Psoas muscle (tissue), 8 donors: ENCODE measurements at regions of chr6 and their contacts with region 1.

Region 1: DNA sequence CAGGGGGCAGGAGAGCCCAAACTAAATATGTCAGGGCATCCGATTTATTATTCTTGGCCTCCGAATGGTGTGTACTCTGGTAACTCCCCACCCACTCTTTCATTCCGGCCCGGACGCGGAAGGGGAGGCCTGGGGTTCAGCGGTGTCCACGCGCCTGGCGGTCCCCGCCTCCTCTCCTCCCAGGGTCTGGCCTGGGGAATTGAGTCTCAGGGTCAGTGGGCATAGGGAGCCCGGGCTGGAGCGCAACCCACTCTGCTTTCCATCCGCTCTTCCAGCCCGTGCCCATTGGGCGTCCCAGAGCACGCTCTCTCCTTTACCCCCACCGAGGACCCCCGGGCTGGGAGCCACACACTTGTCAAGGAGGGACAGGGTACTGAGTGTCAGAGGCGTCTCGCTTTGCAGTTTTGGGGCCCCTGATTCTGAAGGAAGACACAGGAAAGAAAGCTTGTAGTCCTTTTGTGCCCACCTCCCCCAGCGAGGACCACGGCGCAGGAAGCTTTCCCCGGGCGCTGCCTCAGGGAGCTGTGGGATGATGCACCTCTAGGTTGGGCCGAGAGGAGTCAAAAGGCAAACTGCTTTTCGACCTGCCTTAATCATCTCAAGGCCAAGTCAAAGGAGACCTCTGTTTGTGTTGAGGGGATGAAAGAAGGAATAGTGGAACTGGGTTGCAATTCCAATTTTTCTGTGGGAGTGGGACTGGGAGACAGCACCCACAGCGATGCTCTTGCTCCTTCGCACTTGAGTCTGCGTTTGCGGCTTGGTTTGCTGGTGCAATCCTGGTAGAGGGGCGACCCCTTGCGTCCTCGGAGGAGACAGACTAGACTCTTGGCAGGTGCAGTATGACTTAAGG is 2.5 kb downstream of the RSPO3 start:
- DNase-seq: peak; percentile 79 to 88
- ATAC-seq: peak; percentile 81 to 87 (median 81)
- H3K4me3 ChIP-seq: peak overlapping the region; percentile 81
- H3K27ac ChIP-seq: peak overlapping the region; percentile 84
- H3K4me1 ChIP-seq: peaks cover 32% of the 10 kb centered on the region
- H3K27me3 ChIP-seq: peaks cover 0 to 20% (median 0%) of the 10 kb centered on the region in 3 donors
- CTCF ChIP-seq: peak; percentile 81

Region 2: DNA sequence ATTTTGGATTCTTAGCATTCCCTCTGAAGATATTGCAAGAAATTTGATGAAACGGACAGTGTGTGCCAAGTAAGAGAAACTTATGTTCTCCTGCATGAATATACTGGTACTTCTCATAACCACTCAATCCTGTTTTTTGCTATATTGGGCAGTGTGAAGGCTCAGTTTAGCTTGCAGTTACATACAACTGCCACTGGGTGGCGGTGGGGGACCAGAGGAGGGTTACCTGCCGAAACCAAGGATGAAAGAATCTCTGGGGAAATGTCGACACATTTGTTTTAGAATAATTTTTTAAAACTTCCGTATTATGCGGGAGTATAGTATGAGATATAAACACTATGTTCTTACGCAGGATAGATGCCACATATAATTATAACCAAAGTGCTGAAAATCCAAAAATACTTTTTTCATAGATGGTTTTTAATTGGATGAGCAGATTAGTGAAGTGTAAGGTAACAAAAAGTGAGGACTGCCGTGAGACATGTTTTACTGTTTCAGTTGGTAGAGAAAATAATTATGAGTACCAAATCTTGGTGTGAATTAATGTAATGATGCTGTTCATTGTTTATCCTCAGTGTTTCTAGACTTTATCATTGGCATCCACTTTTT is 1124.9 kb before region 1 on chr6:
- intact Hi-C with region 1: loop called in 1 of 2 experiments (anchors 2 kb)
- DNase-seq: peak; percentile 50 to 73
- ATAC-seq: peak; percentile 66 to 96 (median 84)
- H3K4me3 ChIP-seq: no peak overlapping the region
- H3K27ac ChIP-seq: no peak overlapping the region
- H3K4me1 ChIP-seq: no peaks in the 10 kb centered on the region
- H3K27me3 ChIP-seq: no peaks in the 10 kb centered on the region
- CTCF ChIP-seq: peak; percentile 95

Region 3: DNA sequence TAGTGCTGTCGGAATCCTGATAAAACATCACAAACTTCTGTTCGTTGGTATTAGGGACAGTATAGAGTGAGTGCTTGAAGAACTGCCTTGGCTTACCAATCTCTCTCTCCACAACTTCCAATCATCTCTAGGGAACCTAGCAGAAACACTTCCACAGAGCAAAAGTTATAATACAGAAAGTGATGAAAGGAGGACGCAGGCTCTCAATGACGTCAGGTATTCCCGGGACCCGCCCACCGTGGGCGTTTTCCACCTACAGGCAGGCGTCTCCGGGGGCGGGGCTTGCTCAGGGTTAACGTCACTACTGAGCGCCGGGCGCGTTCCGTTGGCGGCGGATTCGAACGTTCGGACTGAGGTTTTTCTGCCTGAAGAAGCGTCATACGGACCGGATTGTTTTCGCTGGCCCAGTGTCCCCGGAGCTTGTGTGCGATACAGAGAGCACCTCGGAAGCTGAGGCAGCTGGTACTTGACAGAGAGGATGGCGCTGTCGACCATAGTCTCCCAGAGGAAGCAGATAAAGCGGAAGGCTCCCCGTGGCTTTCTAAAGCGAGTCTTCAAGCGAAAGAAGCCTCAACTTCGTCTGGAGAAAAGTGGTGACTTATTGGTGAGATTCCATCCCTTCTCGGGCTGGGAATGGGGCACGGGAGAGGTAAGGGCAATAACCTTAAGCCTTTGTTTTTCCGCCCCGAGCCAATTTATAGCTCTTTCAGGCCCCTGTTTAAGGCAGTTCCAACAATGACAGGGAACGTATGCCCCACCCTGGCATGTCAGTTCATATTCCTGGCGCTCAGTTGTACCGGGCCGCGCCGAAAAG is 781.0 kb before region 1 on chr6 and contains the start of gene CENPW:
- intact Hi-C with region 1: loop called in 1 of 2 experiments (anchors 10 kb)
- DNase-seq: peak; percentile 83 to 94
- ATAC-seq: peak; percentile 76 to 93 (median 86)
- H3K4me3 ChIP-seq: peak within 1 kb of the TSS; percentile 76
- H3K27ac ChIP-seq: no peak within 1 kb of the TSS
- H3K4me1 ChIP-seq: peaks cover 12% of the 10 kb centered on the region
- H3K27me3 ChIP-seq: no peaks in the 10 kb centered on the region
- CTCF ChIP-seq: no peak
- total RNA-seq, gene CENPW: 1.3 to 7.4 (median 2.0) TPM

Region 4: GRCh38 chr6:126531840-126532239 is 589.2 kb before region 1 on chr6:
- intact Hi-C with region 1: loop called in 1 of 2 experiments (anchors 10 kb)
- DNase-seq: no peak
- ATAC-seq: no peak
- H3K4me3 ChIP-seq: no peak overlapping the region
- H3K27ac ChIP-seq: no peak overlapping the region
- H3K4me1 ChIP-seq: no peaks in the 10 kb centered on the region
- H3K27me3 ChIP-seq: no peaks in the 10 kb centered on the region
- CTCF ChIP-seq: no peak

Region 5: DNA sequence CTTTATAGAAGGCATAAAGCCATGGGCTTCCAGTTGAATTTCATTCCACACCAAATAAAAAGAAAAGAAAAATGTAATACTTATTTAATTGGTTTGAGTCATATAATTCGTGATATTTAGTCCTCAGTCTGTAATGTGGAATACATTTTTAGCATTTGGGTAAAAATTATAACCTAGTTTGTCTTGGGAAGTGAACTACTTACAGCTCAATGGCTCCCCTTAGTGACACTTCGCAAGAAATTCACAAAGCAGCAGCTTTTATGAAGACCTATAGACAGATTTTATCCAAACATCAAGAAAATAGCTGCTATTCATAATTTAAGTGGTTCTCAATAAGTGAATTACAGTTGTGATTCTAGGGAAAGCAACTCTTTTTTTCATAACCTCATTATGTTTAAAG is 69.5 kb after region 1 on chr6:
- intact Hi-C with region 1: loop called in 1 of 2 experiments (anchors 5 kb)
- DNase-seq: no peak
- ATAC-seq: peak in 2 of 4 donors; percentile 28 to 50
- H3K4me3 ChIP-seq: no peak overlapping the region
- H3K27ac ChIP-seq: peak overlapping the region; percentile 84
- H3K4me1 ChIP-seq: peaks cover 30% of the 10 kb centered on the region
- H3K27me3 ChIP-seq: no peaks in the 10 kb centered on the region
- CTCF ChIP-seq: peak; percentile 58

Region 6: DNA sequence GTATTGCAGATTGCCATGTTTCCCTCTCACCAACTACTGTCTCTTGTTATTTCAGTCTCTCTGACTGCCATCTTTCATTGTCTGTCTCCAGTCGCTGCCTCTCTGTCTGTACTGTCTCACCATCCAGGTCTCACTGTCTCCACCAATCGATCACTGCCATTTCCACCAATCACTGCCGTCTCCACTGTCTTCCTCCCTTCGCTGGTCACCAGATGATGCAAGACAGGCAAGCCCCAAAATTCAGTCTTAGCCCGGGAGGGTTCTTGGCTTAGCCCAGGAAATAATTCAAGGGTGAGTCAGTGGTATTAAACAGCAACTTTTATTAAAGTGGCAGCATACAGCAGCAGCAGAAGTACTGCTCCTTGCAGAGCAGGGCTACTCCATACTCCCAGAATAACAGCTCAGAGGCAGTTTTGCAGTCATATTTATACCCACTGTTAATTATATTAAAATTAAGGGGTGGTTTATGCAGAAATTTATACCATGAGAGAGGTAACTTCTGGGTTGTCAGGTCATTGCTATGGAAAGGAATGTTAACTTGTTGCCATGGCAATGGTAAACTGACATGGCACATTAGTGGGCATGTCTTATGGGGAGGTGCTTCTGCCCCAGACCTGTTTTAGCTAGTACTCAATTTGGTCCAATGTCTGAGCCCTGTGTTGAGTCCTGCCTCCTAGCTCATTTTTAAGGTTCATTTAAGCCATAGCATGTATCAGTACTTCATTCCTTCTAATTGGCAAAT is 245.4 kb after region 1 on chr6:
- intact Hi-C with region 1: no loop called
- DNase-seq: no peak
- ATAC-seq: peak in 3 of 4 donors; percentile 51 to 78 (median 70)
- H3K4me3 ChIP-seq: no peak overlapping the region
- H3K27ac ChIP-seq: no peak overlapping the region
- H3K4me1 ChIP-seq: no peaks in the 10 kb centered on the region
- H3K27me3 ChIP-seq: no peaks in the 10 kb centered on the region
- CTCF ChIP-seq: no peak